ENCODE measurements at regions of chr21 and their contacts with region 1.

Region 1: GRCh38 chr21:30044445-30045064 is 104.8 kb upstream of the GRIK1 start:
- DNase-seq: peak; percentile 1
- H3K4me3 ChIP-seq: no peak overlapping the region; a peak in 1 of 4 replicates
- H3K27ac ChIP-seq: no peak overlapping the region
- H3K4me1 ChIP-seq: no peaks in the 10 kb centered on the region
- H3K27me3 ChIP-seq: no peaks in the 10 kb centered on the region
- CTCF ChIP-seq: peak; percentile 94
- EP300 ChIP-seq: no peak
- RAD21 ChIP-seq: peak; percentile 52

Region 2: GRCh38 chr21:30027986-30028385 is 16.6 kb before region 1 on chr21:
- CTCF ChIA-PET with region 1: interaction called, 17 read pairs
- POLR2A ChIA-PET with region 1: no interaction called
- DNase-seq: no peak
- H3K4me3 ChIP-seq: no peak overlapping the region
- H3K27ac ChIP-seq: no peak overlapping the region
- H3K4me1 ChIP-seq: no peaks in the 10 kb centered on the region
- H3K27me3 ChIP-seq: no peaks in the 10 kb centered on the region
- CTCF ChIP-seq: no peak
- EP300 ChIP-seq: no peak
- RAD21 ChIP-seq: no peak

Region 3: DNA sequence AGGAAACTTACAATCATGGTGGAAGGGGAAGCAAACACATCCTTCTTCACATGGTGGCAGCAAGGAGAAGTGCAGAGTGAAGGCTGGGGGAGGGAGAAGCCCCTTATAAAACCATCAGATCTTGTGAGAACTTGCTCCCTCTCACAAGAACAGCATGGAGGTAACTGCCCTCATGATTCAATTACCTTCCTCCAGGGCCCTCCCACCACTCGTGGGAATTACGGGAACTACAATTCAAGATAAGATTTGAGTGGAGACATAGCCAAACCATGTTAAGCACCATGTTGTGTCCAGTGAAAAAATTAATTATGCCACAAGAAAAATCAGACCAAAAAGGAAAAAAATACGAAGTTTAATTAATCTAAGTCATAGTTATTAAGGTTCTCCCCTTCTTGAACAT is 12.6 kb after region 1 on chr21:
- CTCF ChIA-PET with region 1: interaction called, 19 read pairs
- POLR2A ChIA-PET with region 1: no interaction called
- DNase-seq: no peak
- H3K4me3 ChIP-seq: no peak overlapping the region
- H3K27ac ChIP-seq: no peak overlapping the region
- H3K4me1 ChIP-seq: no peaks in the 10 kb centered on the region
- H3K27me3 ChIP-seq: no peaks in the 10 kb centered on the region; the same call in 1 of the 2 replicates
- CTCF ChIP-seq: no peak
- EP300 ChIP-seq: no peak
- RAD21 ChIP-seq: no peak

Region 4: DNA sequence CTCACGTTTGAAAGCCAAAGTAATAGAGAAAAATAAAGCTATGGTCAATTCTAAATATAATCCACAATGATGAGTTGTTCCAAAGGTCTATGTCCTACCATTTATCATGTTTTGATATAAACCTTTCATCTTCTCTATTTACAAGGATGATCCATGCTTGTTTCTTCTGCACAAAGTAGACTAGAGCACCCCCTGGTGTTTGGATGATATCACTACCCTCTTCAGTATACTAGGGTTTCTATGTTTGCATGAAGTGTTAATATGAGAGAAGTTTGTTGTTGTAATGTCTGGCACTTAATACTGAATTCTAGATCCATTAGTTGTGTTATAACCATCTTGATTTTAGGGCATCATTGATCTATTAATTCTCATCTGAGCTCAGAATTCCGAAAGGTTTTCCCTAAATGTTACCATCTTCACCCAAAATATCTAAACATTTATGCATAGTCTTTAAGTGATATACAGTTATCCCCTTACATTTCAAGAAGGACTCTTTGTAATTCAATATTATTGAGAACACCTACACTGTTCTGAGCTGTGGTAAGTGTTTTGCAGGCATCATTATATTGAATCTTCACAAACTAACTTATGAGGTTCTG is 150.2 kb after region 1 on chr21:
- CTCF ChIA-PET with region 1: interaction called, 13 read pairs
- POLR2A ChIA-PET with region 1: no interaction called
- DNase-seq: peak; percentile 18
- H3K4me3 ChIP-seq: peak overlapping the region in 1 of 2 experiments; percentile 16; a peak in 1 of 4 replicates
- H3K27ac ChIP-seq: no peak overlapping the region
- H3K4me1 ChIP-seq: no peaks in the 10 kb centered on the region
- H3K27me3 ChIP-seq: peaks cover 4% of the 10 kb centered on the region; the same call in 1 of the 2 replicates
- CTCF ChIP-seq: peak; percentile 76
- EP300 ChIP-seq: no peak
- RAD21 ChIP-seq: peak; percentile 61